PC-3 (cell line): ENCODE measurements at regions of chr18 and their contacts with region 1.

Region 1: GRCh38 chr18:47930931-47931717 is 665 bp upstream of the SMAD2 start:
- DNase-seq: peak; percentile 80
- ATAC-seq: peak; percentile 81
- H3K4me3 ChIP-seq: peak overlapping the region; percentile 60
- H3K27ac ChIP-seq: peak overlapping the region; percentile 76
- H3K4me1 ChIP-seq: no peaks in the 10 kb centered on the region; the same call in 1 of the 2 replicates
- H3K27me3 ChIP-seq: no peaks in the 10 kb centered on the region
- CTCF ChIP-seq: no peak

Region 2: GRCh38 chr18:46224181-46224775 is 1706.8 kb before region 1 on chr18:
- CTCF ChIA-PET with region 1: no interaction called
- POLR2A ChIA-PET with region 1: interaction called, 13 read pairs
- intact Hi-C with region 1: no loop called
- DNase-seq: no peak
- ATAC-seq: no peak
- H3K4me3 ChIP-seq: no peak overlapping the region
- H3K27ac ChIP-seq: no peak overlapping the region
- H3K4me1 ChIP-seq: no peaks in the 10 kb centered on the region
- H3K27me3 ChIP-seq: no peaks in the 10 kb centered on the region
- CTCF ChIP-seq: no peak

Region 3: DNA sequence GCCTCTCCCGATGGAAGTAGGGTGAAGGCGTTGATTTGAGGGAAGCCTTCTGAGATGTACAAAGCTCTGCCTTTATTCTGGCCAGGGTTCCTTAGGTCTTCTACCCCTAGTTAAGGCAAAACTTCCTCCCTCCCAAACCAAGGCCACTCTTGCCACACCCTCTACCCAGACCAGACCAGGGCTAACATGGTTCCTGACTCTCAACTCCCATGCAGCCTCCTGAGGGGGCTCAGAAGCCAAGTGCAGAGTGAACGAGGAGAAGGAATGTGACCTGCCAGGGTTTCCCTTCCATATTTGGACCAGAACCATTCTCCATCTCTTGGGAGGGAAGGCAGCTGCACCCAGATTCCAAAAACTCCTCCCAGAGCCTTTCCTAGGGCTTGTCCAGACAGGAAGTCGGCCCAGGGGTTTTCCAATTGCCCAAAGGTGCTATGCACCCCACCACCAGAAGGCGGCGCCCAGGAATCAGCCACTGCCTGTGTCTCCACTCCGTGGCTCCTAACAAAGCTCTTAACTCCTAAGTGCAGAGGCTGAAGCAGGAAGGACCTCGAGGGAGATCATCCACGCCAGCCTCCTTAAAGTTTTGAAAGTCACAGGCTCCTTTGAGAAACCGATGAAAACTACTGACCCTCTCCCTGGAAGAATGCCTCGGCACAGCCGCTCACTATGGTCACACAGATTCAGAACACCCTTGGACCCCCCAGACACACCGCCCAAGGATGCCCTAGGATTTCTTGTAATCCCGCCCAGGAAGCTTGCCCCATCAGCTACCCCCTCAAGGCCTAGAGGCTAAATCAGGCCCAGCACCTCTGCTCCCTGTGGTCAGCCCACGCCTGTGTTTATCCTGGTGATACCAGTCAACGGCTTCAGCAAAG is 158.5 kb before region 1 on chr18:
- CTCF ChIA-PET with region 1: interaction called, 16 read pairs
- POLR2A ChIA-PET with region 1: no interaction called
- intact Hi-C with region 1: no loop called
- DNase-seq: peak; percentile 57
- ATAC-seq: peak; percentile 86
- H3K4me3 ChIP-seq: no peak overlapping the region
- H3K27ac ChIP-seq: no peak overlapping the region
- H3K4me1 ChIP-seq: no peaks in the 10 kb centered on the region
- H3K27me3 ChIP-seq: no peaks in the 10 kb centered on the region
- CTCF ChIP-seq: peak; percentile 60

Region 4: DNA sequence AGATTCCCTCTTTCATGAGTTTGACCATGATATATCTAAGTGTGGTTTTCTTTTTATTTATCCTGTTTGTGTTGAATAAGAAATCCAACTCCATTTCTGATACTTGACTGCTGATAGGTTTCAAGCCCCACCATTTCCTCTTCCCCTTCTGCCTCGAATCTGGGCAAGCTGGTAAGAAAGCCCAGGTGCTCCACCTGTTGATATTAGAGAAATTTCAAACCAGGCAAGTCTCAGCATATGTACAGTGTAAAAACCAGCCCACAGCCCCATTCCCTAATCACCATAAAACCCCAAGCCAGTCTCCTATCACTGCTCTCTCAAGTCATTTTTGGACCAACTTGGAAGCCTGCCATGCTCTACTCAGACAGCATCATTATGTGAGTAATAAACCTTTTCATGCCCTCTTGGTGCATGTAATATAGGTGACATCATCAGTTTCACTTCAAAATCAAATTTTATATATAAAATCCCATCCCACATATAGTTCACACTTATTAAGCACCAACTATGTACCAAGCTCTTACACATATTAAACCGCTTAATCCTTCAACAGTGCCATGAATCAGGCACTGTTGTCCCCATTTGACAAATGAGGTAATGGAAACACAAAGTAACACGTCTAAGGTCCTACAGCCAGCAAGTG is 47.2 kb before region 1 on chr18:
- CTCF ChIA-PET with region 1: no interaction called
- POLR2A ChIA-PET with region 1: no interaction called
- intact Hi-C with region 1: loop called (anchors 1 kb)
- DNase-seq: peak; percentile 51
- ATAC-seq: peak; percentile 12
- H3K4me3 ChIP-seq: no peak overlapping the region
- H3K27ac ChIP-seq: peak overlapping the region; percentile 89
- H3K4me1 ChIP-seq: peaks cover 37% of the 10 kb centered on the region
- H3K27me3 ChIP-seq: no peaks in the 10 kb centered on the region
- CTCF ChIP-seq: no peak

Region 5: GRCh38 chr18:48002933-48003365 is 71.8 kb after region 1 on chr18:
- CTCF ChIA-PET with region 1: no interaction called
- POLR2A ChIA-PET with region 1: interaction called, 12 read pairs
- intact Hi-C with region 1: loop called (anchors 5 kb)
- DNase-seq: peak; percentile 77
- ATAC-seq: peak; percentile 87
- H3K4me3 ChIP-seq: no peak overlapping the region
- H3K27ac ChIP-seq: peak overlapping the region; percentile 97
- H3K4me1 ChIP-seq: peaks cover 23% of the 10 kb centered on the region
- H3K27me3 ChIP-seq: no peaks in the 10 kb centered on the region
- CTCF ChIP-seq: no peak

Region 6: GRCh38 chr18:48022531-48023329 is 91.6 kb after region 1 on chr18:
- CTCF ChIA-PET with region 1: no interaction called
- POLR2A ChIA-PET with region 1: no interaction called
- intact Hi-C with region 1: loop called (anchors 1 kb)
- DNase-seq: peak; percentile 73
- ATAC-seq: peak; percentile 76
- H3K4me3 ChIP-seq: no peak overlapping the region
- H3K27ac ChIP-seq: peak overlapping the region; percentile 73
- H3K4me1 ChIP-seq: peaks cover 10% of the 10 kb centered on the region
- H3K27me3 ChIP-seq: no peaks in the 10 kb centered on the region
- CTCF ChIP-seq: peak; percentile 61